WTC11 (cell line): ENCODE measurements at regions of chr6 and their contacts with region 1.

Region 1: GRCh38 chr6:137313928-137314855 is 95.0 kb upstream of the IFNGR1 start:
- DNase-seq: peak; percentile 73
- ATAC-seq: peak; percentile 78
- H3K4me3 Mint-ChIP-seq: no peak overlapping the region
- H3K27ac Mint-ChIP-seq: no peak overlapping the region
- H3K4me1 Mint-ChIP-seq: peaks cover 23% of the 10 kb centered on the region
- H3K27me3 Mint-ChIP-seq: no peaks in the 10 kb centered on the region
- CTCF ChIP-seq: peak; percentile 71

Region 2: DNA sequence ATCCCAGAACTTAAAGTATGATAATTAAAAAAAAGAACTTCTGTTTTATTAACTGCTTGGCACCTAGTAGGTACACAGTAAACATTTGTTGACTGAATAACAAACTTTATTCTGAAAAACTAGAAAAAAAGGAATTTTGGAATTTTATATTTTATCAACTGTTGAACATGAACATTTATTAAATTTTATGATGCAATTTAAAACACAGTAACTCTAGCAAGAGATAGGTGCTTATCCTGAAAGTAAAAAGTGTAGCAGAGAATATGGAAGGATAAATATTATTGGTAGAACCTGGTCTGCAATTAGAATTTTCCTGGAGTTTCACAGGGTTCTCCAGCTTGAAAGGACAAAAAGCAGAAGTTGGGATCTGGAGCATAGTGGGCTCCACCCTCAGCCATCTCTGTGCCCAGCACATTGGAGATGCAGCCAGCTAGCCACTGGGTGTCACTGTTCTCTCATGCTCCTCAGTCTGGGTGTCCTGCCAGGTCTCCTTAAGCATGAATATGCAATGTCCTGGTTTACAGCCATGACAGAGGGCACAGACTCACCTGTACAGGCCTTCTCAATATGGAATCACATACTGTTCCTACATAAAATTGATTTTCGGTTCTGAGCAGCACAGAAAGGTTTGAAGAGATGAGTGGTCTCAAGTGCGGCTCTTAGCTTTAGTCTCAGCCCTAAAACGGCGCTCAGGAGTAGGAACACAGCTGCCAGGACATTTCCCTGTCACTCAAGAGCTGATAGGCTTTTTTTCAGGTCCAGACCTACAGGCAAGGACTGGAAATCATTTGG is 237.7 kb before region 1 on chr6:
- CTCF ChIA-PET with region 1: interaction called, 20 read pairs
- POLR2A ChIA-PET with region 1: no interaction called
- DNase-seq: peak; percentile 79
- ATAC-seq: peak; percentile 100
- H3K4me3 Mint-ChIP-seq: no peak overlapping the region
- H3K27ac Mint-ChIP-seq: no peak overlapping the region
- H3K4me1 Mint-ChIP-seq: peaks cover 8% of the 10 kb centered on the region; the same call in 1 of the 2 replicates
- H3K27me3 Mint-ChIP-seq: no peaks in the 10 kb centered on the region; the same call in 1 of the 2 replicates
- CTCF ChIP-seq: peak; percentile 46

Region 3: DNA sequence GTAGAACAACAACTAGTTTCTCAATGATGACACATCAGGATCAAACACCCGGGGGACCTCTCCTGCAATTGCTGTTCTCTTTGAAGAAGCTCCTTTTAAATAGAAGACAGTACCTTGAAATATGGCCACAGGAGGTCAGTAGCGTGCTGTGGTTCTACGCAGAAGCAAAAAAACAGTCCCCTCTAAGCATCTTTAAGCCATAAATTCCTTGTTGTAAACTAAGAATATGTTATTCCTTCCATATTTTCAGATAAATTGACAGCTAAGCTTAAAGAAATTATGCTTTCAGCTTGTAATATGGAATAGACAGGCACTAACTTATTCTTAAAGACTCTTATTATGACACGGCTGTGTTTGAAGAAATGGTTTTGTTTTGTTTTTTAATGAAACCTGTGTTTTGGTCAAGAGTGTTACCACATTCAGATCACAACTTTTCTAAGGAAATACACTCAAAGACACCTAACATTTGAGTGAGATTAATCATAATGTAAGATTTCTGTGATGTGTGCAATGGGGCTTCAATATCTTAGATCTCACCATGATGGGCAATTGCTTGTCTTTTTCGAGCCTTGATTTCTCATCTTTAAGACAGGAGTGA is 219.7 kb before region 1 on chr6:
- CTCF ChIA-PET with region 1: interaction called, 29 read pairs
- POLR2A ChIA-PET with region 1: interaction called, 6 read pairs
- DNase-seq: peak; percentile 55
- ATAC-seq: peak; percentile 72
- H3K4me3 Mint-ChIP-seq: no peak overlapping the region
- H3K27ac Mint-ChIP-seq: no peak overlapping the region
- H3K4me1 Mint-ChIP-seq: peaks cover 13% of the 10 kb centered on the region
- H3K27me3 Mint-ChIP-seq: no peaks in the 10 kb centered on the region; the same call in 1 of the 2 replicates
- CTCF ChIP-seq: peak; percentile 45; the same call in 1 of the 2 replicates

Region 4: DNA sequence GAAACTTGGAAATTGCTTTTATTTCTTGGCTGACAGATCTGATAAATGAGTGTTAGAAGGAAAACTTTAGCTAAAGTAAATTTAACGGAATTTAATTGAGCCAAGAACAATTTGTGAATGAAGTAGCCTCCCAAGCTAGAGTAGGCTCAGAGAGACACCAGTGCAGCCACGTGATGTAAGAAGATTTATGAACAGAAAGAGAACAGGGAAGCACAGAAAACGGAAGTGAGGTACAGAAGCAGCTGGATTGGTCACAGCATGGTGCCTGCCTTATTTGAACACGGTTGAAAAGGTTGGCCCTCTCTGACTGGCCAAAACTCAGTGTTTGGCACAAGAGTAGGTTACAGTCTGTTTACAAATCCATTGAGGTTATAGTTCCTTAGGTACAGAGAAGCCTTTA is 65.5 kb before region 1 on chr6:
- CTCF ChIA-PET with region 1: no interaction called
- POLR2A ChIA-PET with region 1: no interaction called
- DNase-seq: no peak
- ATAC-seq: no peak
- H3K4me3 Mint-ChIP-seq: no peak overlapping the region
- H3K27ac Mint-ChIP-seq: no peak overlapping the region
- H3K4me1 Mint-ChIP-seq: no peaks in the 10 kb centered on the region
- H3K27me3 Mint-ChIP-seq: no peaks in the 10 kb centered on the region
- CTCF ChIP-seq: no peak

Region 5: DNA sequence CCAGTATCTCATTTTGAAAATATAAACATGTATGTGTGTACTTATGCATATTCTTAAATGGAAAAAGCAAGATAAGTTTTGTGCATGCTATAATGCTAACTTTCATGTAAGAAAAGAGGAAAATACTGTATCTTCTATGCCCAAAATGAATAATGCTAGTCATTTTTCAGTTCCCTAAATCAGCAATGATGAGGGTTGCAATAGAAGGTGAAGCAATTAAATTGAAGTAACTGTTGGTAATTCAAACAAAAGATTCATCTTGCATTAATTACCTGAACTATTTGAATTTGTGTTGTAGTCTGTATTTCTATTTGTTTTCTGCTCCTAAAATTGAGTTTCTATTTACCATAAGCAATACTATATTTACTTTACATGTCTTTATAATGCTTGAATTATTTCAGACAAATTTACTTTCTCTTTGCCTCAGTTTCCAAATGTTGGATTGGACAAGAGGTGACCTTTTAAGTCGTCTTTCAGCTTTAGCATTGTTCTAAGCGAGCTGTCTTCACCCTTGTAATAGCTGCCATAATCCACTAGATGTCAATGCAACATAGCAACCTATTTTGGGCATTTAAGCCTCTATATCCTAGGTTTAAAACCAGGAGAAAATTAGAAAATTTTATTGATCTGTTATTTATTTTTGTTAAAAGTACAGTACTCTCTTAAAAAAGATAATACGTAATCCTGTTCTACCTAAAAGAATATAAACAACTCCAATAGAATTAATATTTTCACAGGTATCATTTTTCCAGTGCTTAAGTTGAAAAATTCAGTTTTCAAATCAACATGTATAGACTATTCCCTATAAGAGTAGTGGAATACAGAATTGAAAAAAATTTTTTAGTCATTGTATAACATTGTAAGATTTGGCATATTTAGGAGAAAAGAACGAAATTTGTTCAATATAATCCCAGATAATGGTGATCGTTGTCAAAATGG is 42.7 kb before region 1 on chr6:
- CTCF ChIA-PET with region 1: interaction called, 53 read pairs
- POLR2A ChIA-PET with region 1: no interaction called
- DNase-seq: no peak
- ATAC-seq: peak; percentile 84
- H3K4me3 Mint-ChIP-seq: no peak overlapping the region
- H3K27ac Mint-ChIP-seq: no peak overlapping the region
- H3K4me1 Mint-ChIP-seq: no peaks in the 10 kb centered on the region
- H3K27me3 Mint-ChIP-seq: no peaks in the 10 kb centered on the region
- CTCF ChIP-seq: peak; percentile 67

Region 6: GRCh38 chr6:137283940-137284810 is 30.0 kb before region 1 on chr6:
- CTCF ChIA-PET with region 1: interaction called, 12 read pairs
- POLR2A ChIA-PET with region 1: no interaction called
- DNase-seq: no peak
- ATAC-seq: no peak
- H3K4me3 Mint-ChIP-seq: no peak overlapping the region
- H3K27ac Mint-ChIP-seq: no peak overlapping the region
- H3K4me1 Mint-ChIP-seq: no peaks in the 10 kb centered on the region
- H3K27me3 Mint-ChIP-seq: peaks cover 19% of the 10 kb centered on the region
- CTCF ChIP-seq: no peak

Region 7: DNA sequence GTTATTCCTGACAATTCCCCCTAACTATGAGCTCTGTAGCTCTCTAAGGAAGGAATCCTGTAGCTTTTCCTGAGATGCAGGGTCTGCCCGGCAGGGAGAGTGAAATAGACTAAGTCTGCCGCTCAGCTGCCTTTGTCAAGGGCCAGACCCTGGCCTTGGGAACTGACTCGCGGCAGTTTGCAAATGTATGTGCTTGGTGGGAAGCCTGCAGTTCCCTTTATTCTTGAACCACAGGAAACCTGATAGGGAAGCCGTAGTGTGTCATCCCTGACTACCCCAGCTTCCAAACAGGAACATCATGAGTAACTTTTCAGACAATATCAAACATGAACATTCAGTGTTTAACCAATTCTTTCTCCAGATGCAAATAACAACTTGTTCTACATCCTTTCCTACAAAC is 16.3 kb before region 1 on chr6:
- CTCF ChIA-PET with region 1: interaction called, 51 read pairs
- POLR2A ChIA-PET with region 1: interaction called, 4 read pairs
- DNase-seq: peak; percentile 76
- ATAC-seq: peak; percentile 99
- H3K4me3 Mint-ChIP-seq: 0 out of 2 replicates have a peak overlapping the region, but pooled peaks have one; percentile 32
- H3K27ac Mint-ChIP-seq: peak overlapping the region; percentile 94
- H3K4me1 Mint-ChIP-seq: peaks cover 57% of the 10 kb centered on the region
- H3K27me3 Mint-ChIP-seq: peaks cover 7% of the 10 kb centered on the region; the same call in 1 of the 2 replicates
- CTCF ChIP-seq: no peak

Region 8: GRCh38 chr6:137348777-137349176 is 34.6 kb after region 1 on chr6:
- CTCF ChIA-PET with region 1: no interaction called
- POLR2A ChIA-PET with region 1: no interaction called
- DNase-seq: no peak
- ATAC-seq: no peak
- H3K4me3 Mint-ChIP-seq: no peak overlapping the region
- H3K27ac Mint-ChIP-seq: no peak overlapping the region
- H3K4me1 Mint-ChIP-seq: no peaks in the 10 kb centered on the region
- H3K27me3 Mint-ChIP-seq: no peaks in the 10 kb centered on the region
- CTCF ChIP-seq: no peak

Region 9: DNA sequence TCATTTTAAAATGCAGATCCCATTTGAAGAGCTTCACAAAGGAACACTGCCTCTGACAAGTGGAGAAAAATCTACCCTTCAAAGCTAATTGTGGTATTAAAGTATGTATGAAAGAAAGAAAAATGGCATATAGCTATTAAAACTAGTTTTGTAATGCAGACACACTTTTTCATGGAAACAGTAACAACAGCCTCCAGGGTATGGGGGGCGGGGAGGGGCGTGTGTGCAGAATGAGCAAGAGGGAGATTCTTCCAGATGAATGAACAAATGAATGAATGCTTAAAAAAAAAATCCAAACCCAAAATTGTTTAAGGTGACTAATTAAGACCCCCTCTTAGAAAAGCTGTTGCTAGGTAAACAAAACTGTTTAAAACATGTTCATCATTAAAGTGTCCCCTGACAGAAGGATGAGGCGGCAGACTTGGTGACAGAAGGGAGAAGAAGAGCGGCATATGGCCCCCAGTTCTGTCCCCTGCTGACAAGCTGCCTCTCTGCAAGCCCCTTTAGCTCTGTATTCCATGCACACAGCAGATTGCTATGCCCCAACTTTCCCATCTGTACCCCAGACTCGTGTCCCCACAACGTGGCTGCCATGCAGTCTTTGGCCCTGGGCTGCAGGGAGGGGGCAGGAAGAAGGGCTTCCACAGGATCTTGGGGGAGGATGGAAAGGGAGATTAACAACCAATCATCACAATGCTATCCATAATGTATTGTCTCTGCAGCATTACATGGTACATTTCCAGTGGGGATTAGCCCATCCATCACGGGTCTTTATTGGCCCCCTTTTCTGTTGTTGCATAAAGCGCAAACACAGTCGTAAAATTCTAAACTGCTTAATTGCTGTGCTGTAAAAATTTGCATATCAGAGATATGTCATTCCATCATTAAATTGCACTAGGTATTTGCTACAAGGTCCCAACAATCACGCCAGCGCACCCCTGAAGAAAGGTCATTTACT is 288.4 kb after region 1 on chr6:
- CTCF ChIA-PET with region 1: no interaction called
- POLR2A ChIA-PET with region 1: no interaction called
- DNase-seq: no peak
- ATAC-seq: no peak
- H3K4me3 Mint-ChIP-seq: no peak overlapping the region
- H3K27ac Mint-ChIP-seq: no peak overlapping the region
- H3K4me1 Mint-ChIP-seq: peaks cover 9% of the 10 kb centered on the region
- H3K27me3 Mint-ChIP-seq: no peaks in the 10 kb centered on the region
- CTCF ChIP-seq: no peak